H1 (cell line): ENCODE measurements at regions of chr12 and their contacts with region 1.

Region 1: DNA sequence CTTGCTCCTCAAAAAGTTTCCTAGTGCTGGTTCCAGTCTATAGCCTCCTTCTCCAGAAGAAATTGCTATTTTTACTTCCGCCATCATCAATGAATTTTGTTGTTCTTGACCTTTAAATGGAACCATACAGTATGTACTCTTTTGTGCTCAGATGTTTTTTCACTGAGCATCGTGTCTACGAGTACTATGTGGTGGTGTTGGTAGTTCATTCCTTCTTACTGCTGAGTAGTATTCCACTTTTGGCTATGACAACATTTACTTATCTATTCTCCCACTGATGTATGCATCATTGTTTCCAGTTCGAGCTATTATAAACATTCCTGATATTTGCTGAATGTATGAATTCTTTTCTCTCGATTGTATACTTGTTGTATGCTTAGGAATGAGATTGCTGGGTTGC is 28.6 kb downstream of the SLC2A14 start:
- DNase-seq: no peak
- H3K4me3 ChIP-seq: no peak overlapping the region
- H3K27ac ChIP-seq: no peak overlapping the region
- H3K4me1 ChIP-seq: peaks cover 0 to 5% (median 3%) of the 10 kb centered on the region in 4 experiments; a peak in 3 of 7 replicates
- H3K27me3 ChIP-seq: no peaks in the 10 kb centered on the region
- CTCF ChIP-seq: no peak
- EP300 ChIP-seq: no peak
- POLR2A ChIP-seq: no peak
- RAD21 ChIP-seq: no peak

Region 2: GRCh38 chr12:7344833-7345606 is 499.1 kb before region 1 on chr12:
- CTCF ChIA-PET with region 1: no interaction called
- POLR2A ChIA-PET with region 1: no interaction called
- DNase-seq: no peak
- H3K4me3 ChIP-seq: no peak overlapping the region; a peak in 1 of 8 replicates
- H3K27ac ChIP-seq: no peak overlapping the region
- H3K4me1 ChIP-seq: no peaks in the 10 kb centered on the region
- H3K27me3 ChIP-seq: no peaks in the 10 kb centered on the region
- CTCF ChIP-seq: no peak
- EP300 ChIP-seq: no peak
- POLR2A ChIP-seq: no peak
- RAD21 ChIP-seq: no peak

Region 3: GRCh38 chr12:7832059-7832696 is 11.9 kb before region 1 on chr12:
- CTCF ChIA-PET with region 1: interaction called, 15 read pairs
- POLR2A ChIA-PET with region 1: interaction called, 5 read pairs
- DNase-seq: no peak
- H3K4me3 ChIP-seq: no peak overlapping the region
- H3K27ac ChIP-seq: no peak overlapping the region
- H3K4me1 ChIP-seq: no peaks in the 10 kb centered on the region; a peak in 1 of 7 replicates
- H3K27me3 ChIP-seq: no peaks in the 10 kb centered on the region
- CTCF ChIP-seq: peak; percentile 36 to 81 (median 65)
- EP300 ChIP-seq: no peak
- POLR2A ChIP-seq: no peak
- RAD21 ChIP-seq: peak; percentile 72 to 78